Left ventricle myocardium superior (tissue), 1 donor: ENCODE measurements at regions of chr2 and their contacts with region 1.

Region 1: DNA sequence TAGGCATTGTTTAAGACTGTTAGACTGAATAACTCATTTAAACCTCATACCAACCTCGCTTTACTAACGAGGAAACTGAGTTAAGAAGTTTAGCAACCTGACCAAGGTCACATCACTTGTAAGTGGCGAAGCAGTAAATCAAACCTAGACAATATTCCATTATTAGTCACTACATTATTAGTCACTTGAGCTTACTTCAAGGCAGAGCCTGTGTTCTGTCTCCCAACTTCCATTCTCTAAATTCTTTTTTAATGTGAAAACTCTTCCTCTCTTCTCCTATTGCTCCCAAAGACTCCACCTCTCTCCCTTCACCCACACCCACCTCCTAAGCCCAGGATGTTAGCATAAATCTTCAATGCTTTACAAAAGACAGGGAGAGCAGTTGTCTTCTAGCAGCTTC is 156.5 kb downstream of the ARL6IP6 start:
- DNase-seq: no peak
- ATAC-seq: no peak

Region 2: GRCh38 chr2:152485954-152486736 is 388.8 kb before region 1 on chr2:
- intact Hi-C with region 1: no loop called
- DNase-seq: no peak
- ATAC-seq: peak; percentile 40

Region 3: DNA sequence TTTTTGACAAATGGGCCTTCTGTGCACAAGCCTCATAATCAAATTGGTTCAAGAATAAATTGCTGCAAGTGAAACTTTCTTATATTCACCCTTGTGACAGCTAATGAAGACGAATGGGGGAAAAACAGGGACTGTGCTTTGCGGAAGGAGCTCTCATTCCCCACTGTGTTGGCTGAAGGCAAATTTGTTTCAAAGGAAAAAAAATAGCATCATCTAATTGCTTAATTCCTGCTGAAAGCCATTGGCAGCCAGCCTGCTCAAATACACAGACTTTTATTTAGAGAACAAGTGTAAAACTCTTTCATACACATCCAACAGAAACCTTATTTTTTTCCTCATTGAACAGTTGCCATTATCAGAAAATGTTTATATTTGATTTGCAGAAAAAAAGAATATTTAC is 15.8 kb after region 1 on chr2:
- intact Hi-C with region 1: loop called (anchors 1 kb)
- DNase-seq: no peak
- ATAC-seq: no peak